ENCODE measurements at regions of chr4 and their contacts with region 1.

Region 1: GRCh38 chr4:80215449-80216052 is 18.2 kb downstream of the PRDM8 start:
- DNase-seq: no peak
- H3K4me3 Mint-ChIP-seq: no peak overlapping the region
- H3K27ac Mint-ChIP-seq: no peak overlapping the region
- H3K4me1 Mint-ChIP-seq: peaks cover 5% of the 10 kb centered on the region
- H3K27me3 Mint-ChIP-seq: peaks cover 45% of the 10 kb centered on the region

Region 2: GRCh38 chr4:78951862-78952472 is 1263.6 kb before region 1 on chr4:
- intact Hi-C with region 1: loop called (anchors 1 kb)
- DNase-seq: no peak
- H3K4me3 Mint-ChIP-seq: no peak overlapping the region
- H3K27ac Mint-ChIP-seq: no peak overlapping the region
- H3K4me1 Mint-ChIP-seq: no peaks in the 10 kb centered on the region
- H3K27me3 Mint-ChIP-seq: peaks cover 39% of the 10 kb centered on the region

Region 3: GRCh38 chr4:79042079-79042674 is 1173.4 kb before region 1 on chr4:
- intact Hi-C with region 1: loop called (anchors 10 kb)
- DNase-seq: no peak
- H3K4me3 Mint-ChIP-seq: no peak overlapping the region
- H3K27ac Mint-ChIP-seq: no peak overlapping the region
- H3K4me1 Mint-ChIP-seq: no peaks in the 10 kb centered on the region
- H3K27me3 Mint-ChIP-seq: peaks cover 2% of the 10 kb centered on the region

Region 4: GRCh38 chr4:79917246-79917645 is 298.3 kb before region 1 on chr4:
- intact Hi-C with region 1: loop called (anchors 1 kb)
- DNase-seq: peak; percentile 25
- H3K4me3 Mint-ChIP-seq: no peak overlapping the region
- H3K27ac Mint-ChIP-seq: no peak overlapping the region
- H3K4me1 Mint-ChIP-seq: peaks cover 36% of the 10 kb centered on the region
- H3K27me3 Mint-ChIP-seq: no peaks in the 10 kb centered on the region

Region 5: GRCh38 chr4:80202190-80202711 is 13.3 kb before region 1 on chr4:
- intact Hi-C with region 1: loop called (anchors 1 kb)
- DNase-seq: peak; percentile 79
- H3K4me3 Mint-ChIP-seq: peak overlapping the region; percentile 80
- H3K27ac Mint-ChIP-seq: peak overlapping the region; percentile 73
- H3K4me1 Mint-ChIP-seq: peaks cover 29% of the 10 kb centered on the region
- H3K27me3 Mint-ChIP-seq: peaks cover 21% of the 10 kb centered on the region

Measured in activated T-helper 1 cell treated with anti-CD3 and anti-CD28 coated beads, Interleukin-12 subunit alpha, Interleukin-12 subunit beta, Interleukin-2, Interleukin-4 antibody, amounts not matched to agents 30 ng/mL and 10 ng/mL and 1 ng/mL, durations not matched to agents 14 hours and 24 hours and 36 hours (primary cell).